Breast epithelium (tissue), 4 donors: ENCODE measurements at regions of chr7 and their contacts with region 1.

Region 1: DNA sequence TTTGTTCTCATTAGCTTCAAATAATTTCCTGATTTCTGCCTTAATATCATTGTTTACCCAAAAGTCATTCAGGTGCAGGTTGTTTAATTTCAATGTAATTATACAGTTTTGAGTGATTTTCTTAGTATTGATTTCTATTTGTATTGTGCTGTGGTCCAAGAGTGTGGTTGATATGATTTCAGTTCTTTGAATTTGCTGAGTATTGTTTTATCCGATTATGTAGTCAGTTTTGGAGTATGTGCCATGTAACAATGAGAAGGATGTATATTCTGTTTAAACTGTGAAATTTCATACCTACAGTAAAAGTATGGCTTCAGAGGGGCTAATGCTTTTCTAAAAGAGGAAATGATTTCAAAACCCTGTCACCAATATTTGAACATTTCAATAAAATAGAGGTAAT is 17.4 kb upstream of the GRM8 start:
- DNase-seq: no peak
- H3K4me3 ChIP-seq: no peak overlapping the region
- H3K27ac ChIP-seq: no peak overlapping the region
- H3K4me1 ChIP-seq: no peaks in the 10 kb centered on the region
- H3K27me3 ChIP-seq: no peaks in the 10 kb centered on the region
- CTCF ChIP-seq: no peak
- POLR2A ChIP-seq: no peak

Region 2: DNA sequence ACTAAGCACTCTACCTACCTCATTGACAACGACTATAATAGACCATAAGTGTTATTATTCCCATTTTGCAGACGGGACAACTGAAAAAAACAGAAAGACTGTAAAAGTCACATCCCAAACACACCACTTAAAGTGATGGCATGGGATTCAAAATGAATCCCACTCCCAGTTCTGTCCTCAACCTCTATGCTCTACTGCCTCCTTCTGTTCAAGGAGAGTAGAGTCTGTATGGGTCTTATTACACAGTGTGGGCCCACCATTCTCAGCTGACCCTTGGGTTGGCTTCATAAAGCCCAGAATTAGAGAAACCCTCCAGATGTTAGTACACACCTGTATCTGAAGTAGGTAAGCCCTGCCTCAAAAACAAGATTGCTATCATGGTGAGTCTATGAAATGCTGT is 119.5 kb before region 1 on chr7:
- intact Hi-C with region 1: loop called (anchors 5 kb)
- DNase-seq: no peak
- H3K4me3 ChIP-seq: no peak overlapping the region
- H3K27ac ChIP-seq: no peak overlapping the region
- H3K4me1 ChIP-seq: no peaks in the 10 kb centered on the region
- H3K27me3 ChIP-seq: no peaks in the 10 kb centered on the region
- CTCF ChIP-seq: no peak
- POLR2A ChIP-seq: no peak